Activated CD4-positive, alpha-beta T cell treated with anti-CD3 and anti-CD28 coated beads, Interleukin-2, amount 10 ng/mL, durations not matched to agents 7 days and 5 days (primary cell): ENCODE measurements at regions of chr12 and their contacts with region 1.

Region 1: GRCh38 chr12:47216150-47216677 is 136.5 kb upstream of the AMIGO2 start:
- DNase-seq: peak; percentile 86
- H3K4me3 Mint-ChIP-seq: peak overlapping the region; percentile 86
- H3K27ac Mint-ChIP-seq: peak overlapping the region; percentile 95
- H3K4me1 Mint-ChIP-seq: peaks cover 43% of the 10 kb centered on the region
- H3K27me3 Mint-ChIP-seq: no peaks in the 10 kb centered on the region

Region 2: DNA sequence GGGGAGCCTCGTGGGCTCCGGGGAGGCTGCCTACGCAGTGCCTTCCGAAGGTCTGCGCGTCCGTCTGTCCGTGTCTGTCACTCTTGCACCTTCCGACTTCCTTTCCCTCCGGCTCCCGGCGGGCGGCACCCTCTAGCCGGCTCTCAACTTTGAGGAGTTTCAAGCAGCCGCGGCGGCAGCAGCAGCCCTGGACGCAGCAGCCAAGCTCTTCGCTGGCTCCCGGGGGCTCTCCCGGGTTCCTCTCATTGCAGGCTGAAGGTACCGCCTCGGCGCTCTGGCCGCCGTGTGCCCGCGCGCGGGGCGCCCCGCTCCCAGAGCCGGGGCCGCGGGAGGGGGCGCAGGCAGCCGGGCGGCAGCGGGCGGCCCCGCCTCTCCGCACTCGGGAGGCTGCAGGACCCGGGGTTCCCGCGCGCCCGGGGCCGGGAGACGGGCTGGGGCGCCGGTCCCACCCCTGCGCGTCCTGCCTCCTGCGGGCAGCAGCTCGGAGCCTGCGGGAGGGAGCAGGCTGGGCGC is 136.7 kb before region 1 on chr12 and contains the starts of genes AMIGO2 and PCED1B:
- CTCF ChIA-PET with region 1: interaction called, 10 read pairs
- POLR2A ChIA-PET with region 1: interaction called, 5 read pairs
- DNase-seq: peak; percentile 69
- H3K4me3 Mint-ChIP-seq: peak within 1 kb of the TSS; percentile 88
- H3K27ac Mint-ChIP-seq: peak within 1 kb of the TSS; percentile 95
- H3K4me1 Mint-ChIP-seq: peaks cover 69% of the 10 kb centered on the region
- H3K27me3 Mint-ChIP-seq: no peaks in the 10 kb centered on the region
- total RNA-seq, gene AMIGO2: 10.3 to 10.8 TPM
- total RNA-seq, gene PCED1B: 58.7 to 59.7 TPM

Region 3: DNA sequence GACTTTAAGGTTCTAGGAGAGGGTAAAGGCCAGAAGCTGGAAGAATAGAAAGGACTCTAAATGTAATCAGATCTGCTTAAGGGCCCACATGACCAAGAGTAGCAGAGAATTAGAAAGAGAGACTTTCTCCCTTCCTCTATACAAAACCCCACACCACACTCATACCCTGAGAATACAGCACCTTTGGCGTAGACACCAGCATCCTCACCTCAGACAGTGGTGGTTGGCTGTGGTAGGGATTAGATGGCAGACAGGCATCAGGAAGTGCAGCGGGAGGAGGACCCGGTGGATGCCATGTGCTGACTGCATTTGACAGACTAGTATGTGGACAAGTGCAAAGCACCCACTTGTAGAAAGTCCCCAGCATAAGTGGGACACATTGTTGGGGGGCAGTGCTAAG is 38.2 kb before region 1 on chr12:
- CTCF ChIA-PET with region 1: no interaction called
- POLR2A ChIA-PET with region 1: no interaction called
- DNase-seq: no peak
- H3K4me3 Mint-ChIP-seq: no peak overlapping the region
- H3K27ac Mint-ChIP-seq: no peak overlapping the region
- H3K4me1 Mint-ChIP-seq: peaks cover 9% of the 10 kb centered on the region
- H3K27me3 Mint-ChIP-seq: no peaks in the 10 kb centered on the region

Region 4: GRCh38 chr12:47228802-47229201 is 12.6 kb after region 1 on chr12:
- CTCF ChIA-PET with region 1: interaction called, 10 read pairs
- POLR2A ChIA-PET with region 1: interaction called, 4 read pairs
- DNase-seq: no peak
- H3K4me3 Mint-ChIP-seq: no peak overlapping the region
- H3K27ac Mint-ChIP-seq: peak overlapping the region; percentile 41
- H3K4me1 Mint-ChIP-seq: peaks cover 67% of the 10 kb centered on the region
- H3K27me3 Mint-ChIP-seq: no peaks in the 10 kb centered on the region

Region 5: GRCh38 chr12:47268501-47269454 is 52.6 kb after region 1 on chr12:
- CTCF ChIA-PET with region 1: no interaction called
- POLR2A ChIA-PET with region 1: no interaction called
- DNase-seq: no peak
- H3K4me3 Mint-ChIP-seq: no peak overlapping the region
- H3K27ac Mint-ChIP-seq: no peak overlapping the region
- H3K4me1 Mint-ChIP-seq: peaks cover 58% of the 10 kb centered on the region
- H3K27me3 Mint-ChIP-seq: no peaks in the 10 kb centered on the region